Psoas muscle (tissue), 8 donors: ENCODE measurements at regions of chr1 and their contacts with region 1.

Region 1: GRCh38 chr1:50027794-50028193 is 4.0 kb upstream of the AGBL4 start:
- DNase-seq: no peak
- ATAC-seq: no peak
- H3K4me3 ChIP-seq: no peak overlapping the region
- H3K27ac ChIP-seq: no peak overlapping the region
- H3K4me1 ChIP-seq: no peaks in the 10 kb centered on the region
- H3K27me3 ChIP-seq: peaks cover 0 to 19% (median 4%) of the 10 kb centered on the region in 3 donors
- CTCF ChIP-seq: no peak

Region 2: DNA sequence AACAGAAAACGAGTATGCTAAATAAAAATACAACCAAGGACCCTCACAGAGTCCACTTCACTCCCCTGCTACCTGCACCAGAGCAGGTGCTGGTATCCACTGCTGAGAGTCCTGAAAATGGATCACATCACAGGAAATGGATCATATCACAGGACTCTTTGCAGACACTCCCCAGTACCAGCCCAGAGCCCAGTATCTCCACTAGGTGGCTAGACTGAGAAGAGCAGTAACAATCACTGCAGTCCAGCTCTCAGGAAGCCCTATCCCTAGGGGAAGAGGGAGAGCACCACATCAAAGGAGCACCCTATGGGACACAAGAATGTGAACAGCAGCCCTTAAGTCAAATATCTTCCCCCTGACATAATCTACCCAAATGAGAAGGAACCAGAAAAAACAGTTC is 32.1 kb before region 1 on chr1:
- intact Hi-C with region 1: loop called in 1 of 2 experiments (anchors 1 kb)
- DNase-seq: no peak
- ATAC-seq: no peak
- H3K4me3 ChIP-seq: no peak overlapping the region
- H3K27ac ChIP-seq: no peak overlapping the region
- H3K4me1 ChIP-seq: no peaks in the 10 kb centered on the region
- H3K27me3 ChIP-seq: no peaks in the 10 kb centered on the region
- CTCF ChIP-seq: no peak

Region 3: GRCh38 chr1:50047916-50048694 is 20.3 kb after region 1 on chr1:
- intact Hi-C with region 1: no loop called
- DNase-seq: peak in 1 of 2 donors; percentile 36
- ATAC-seq: no peak
- H3K4me3 ChIP-seq: peak overlapping the region; percentile 46
- H3K27ac ChIP-seq: no peak overlapping the region
- H3K4me1 ChIP-seq: no peaks in the 10 kb centered on the region
- H3K27me3 ChIP-seq: peaks cover 0 to 35% (median 6%) of the 10 kb centered on the region in 3 donors
- CTCF ChIP-seq: no peak

Region 4: GRCh38 chr1:50232336-50232735 is 204.5 kb after region 1 on chr1:
- intact Hi-C with region 1: no loop called
- DNase-seq: no peak
- ATAC-seq: no peak
- H3K4me3 ChIP-seq: no peak overlapping the region
- H3K27ac ChIP-seq: no peak overlapping the region
- H3K4me1 ChIP-seq: no peaks in the 10 kb centered on the region
- H3K27me3 ChIP-seq: peaks cover 0 to 2% (median 0%) of the 10 kb centered on the region in 3 donors
- CTCF ChIP-seq: no peak